PC-9 (cell line): ENCODE measurements at regions of chr10 and their contacts with region 1.

Region 1: GRCh38 chr10:71999360-72000072 is 35.3 kb downstream of the CHST3 start:
- DNase-seq: no peak
- H3K4me3 ChIP-seq: no peak overlapping the region
- H3K27ac ChIP-seq: peak overlapping the region; percentile 69
- H3K4me1 ChIP-seq: peaks cover 29% of the 10 kb centered on the region
- H3K27me3 ChIP-seq: no peaks in the 10 kb centered on the region
- CTCF ChIP-seq: no peak

Region 2: DNA sequence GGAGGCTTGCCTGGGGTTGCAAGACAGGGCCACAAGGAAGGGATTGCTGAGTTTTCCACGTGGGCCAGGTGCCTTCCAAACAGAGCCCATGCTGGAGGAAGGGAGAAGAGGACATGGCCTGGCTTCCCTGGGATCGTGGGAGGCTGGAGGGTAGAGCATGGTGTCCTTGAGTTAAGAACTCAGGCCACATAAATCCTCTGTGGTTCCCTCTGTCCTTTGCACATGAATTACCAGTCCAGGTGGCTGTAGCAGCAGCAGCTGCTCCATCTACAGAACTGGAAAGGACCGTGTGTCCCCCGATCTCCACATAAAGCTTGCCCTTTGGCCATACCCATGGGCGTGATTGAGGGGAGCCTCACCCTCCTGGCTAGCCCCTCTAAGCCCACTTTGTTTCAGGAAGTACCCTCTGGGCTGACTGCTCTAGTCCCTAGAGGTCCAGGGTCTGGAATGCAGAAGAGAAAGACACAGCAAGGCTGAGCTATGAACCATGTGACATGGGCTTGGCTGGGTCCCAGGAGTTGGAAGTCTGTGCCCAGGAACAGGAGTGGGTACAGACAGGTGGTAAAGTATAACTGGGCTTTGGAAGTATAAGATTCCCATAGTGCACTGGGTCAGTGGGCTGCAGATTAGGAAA is 364.9 kb before region 1 on chr10:
- CTCF ChIA-PET with region 1: no interaction called
- POLR2A ChIA-PET with region 1: no interaction called
- intact Hi-C with region 1: no loop called
- DNase-seq: no peak
- H3K4me3 ChIP-seq: no peak overlapping the region
- H3K27ac ChIP-seq: no peak overlapping the region
- H3K4me1 ChIP-seq: peaks cover 16% of the 10 kb centered on the region
- H3K27me3 ChIP-seq: no peaks in the 10 kb centered on the region
- CTCF ChIP-seq: no peak

Region 3: GRCh38 chr10:71893920-71894319 is 105.6 kb before region 1 on chr10:
- CTCF ChIA-PET with region 1: interaction called, 15 read pairs
- POLR2A ChIA-PET with region 1: no interaction called
- intact Hi-C with region 1: no loop called
- DNase-seq: no peak
- H3K4me3 ChIP-seq: no peak overlapping the region
- H3K27ac ChIP-seq: no peak overlapping the region
- H3K4me1 ChIP-seq: peaks cover 16% of the 10 kb centered on the region
- H3K27me3 ChIP-seq: no peaks in the 10 kb centered on the region
- CTCF ChIP-seq: no peak

Region 4: DNA sequence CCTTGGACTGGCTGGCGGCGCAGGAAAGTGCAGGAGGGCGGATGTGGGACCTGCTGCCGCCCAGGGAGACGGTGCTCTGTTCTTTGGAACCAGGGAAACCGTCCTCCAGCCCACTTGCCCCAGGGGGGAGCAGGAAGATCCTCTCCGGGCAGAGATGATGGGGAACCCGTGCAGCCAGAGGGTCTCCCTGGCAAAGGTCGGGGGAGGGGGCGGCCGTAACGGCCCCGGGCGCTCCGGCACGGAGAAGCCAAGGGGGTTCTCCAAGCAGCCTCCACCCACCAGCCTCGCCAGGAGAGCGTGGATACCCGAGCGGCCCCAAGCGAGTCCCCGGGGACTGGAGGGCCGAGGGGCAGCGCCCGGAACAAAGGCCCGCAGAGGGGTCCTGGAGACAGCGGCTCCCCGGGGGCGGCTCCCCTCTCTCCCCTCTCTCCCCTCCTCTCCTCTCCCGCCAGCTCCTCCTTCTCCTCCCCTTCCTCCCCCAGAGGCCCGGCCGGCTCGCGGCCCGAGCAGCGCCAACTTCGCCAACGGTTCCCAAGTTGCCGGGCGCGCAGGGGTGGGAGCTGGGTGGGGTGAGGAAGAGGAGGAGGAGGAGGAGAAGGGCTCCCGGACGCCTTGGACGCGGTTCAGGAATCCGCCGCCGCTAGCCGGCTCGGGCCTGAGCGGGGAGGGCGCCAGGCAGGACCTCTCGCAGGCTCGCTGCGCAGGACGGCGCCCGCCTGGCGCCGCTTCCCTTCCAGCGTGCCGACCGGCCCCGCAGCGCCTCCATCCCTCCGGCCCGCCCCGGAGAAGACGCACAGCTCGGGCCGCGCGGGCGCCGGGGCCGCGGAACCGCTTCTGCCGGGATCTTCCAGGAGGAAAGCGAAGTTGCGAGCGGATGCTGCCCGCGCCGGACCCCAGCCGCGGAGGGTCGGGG is 35.5 kb before region 1 on chr10 and contains the start of gene CHST3:
- CTCF ChIA-PET with region 1: interaction called, 18 read pairs
- POLR2A ChIA-PET with region 1: no interaction called
- intact Hi-C with region 1: no loop called
- DNase-seq: peak in 1 of 2 experiments; percentile 58
- H3K4me3 ChIP-seq: peak within 1 kb of the TSS; percentile 74
- H3K27ac ChIP-seq: no peak within 1 kb of the TSS
- H3K4me1 ChIP-seq: peaks cover 41% of the 10 kb centered on the region
- H3K27me3 ChIP-seq: no peaks in the 10 kb centered on the region
- CTCF ChIP-seq: no peak
- total RNA-seq, gene CHST3: 21.3 and 23.3 TPM in 2 replicates

Region 5: DNA sequence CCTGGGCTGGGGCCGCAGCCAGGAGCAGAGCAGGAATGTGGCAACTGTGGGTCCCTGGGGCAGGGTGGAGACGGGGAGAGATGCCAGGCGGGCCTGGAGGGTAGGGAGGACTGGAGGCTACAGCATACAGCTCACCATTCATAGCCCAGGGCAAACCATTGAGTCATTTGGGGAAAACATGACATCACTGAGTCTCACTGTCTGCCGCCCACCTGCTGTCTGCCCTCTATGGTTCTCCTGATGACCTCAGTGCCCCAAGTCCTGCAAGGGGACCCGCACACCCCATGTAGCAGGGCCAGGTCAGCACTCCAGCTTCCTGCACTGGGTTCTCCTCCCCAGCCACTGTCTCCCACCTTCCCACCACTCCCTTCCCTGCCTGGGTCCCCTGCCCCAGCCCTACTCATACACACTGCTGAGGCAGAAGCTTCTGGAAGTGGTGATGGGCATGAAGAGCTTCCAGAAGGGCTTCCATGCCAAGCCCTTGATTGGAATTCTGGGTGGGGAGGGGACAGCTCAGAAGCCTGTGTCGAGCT is 25.0 kb before region 1 on chr10:
- CTCF ChIA-PET with region 1: interaction called, 4 read pairs
- POLR2A ChIA-PET with region 1: interaction called, 12 read pairs
- intact Hi-C with region 1: loop called (anchors 1 kb)
- DNase-seq: peak; percentile 69 to 91
- H3K4me3 ChIP-seq: no peak overlapping the region
- H3K27ac ChIP-seq: peak overlapping the region; percentile 56
- H3K4me1 ChIP-seq: peaks cover 37% of the 10 kb centered on the region
- H3K27me3 ChIP-seq: no peaks in the 10 kb centered on the region
- CTCF ChIP-seq: no peak

Region 6: DNA sequence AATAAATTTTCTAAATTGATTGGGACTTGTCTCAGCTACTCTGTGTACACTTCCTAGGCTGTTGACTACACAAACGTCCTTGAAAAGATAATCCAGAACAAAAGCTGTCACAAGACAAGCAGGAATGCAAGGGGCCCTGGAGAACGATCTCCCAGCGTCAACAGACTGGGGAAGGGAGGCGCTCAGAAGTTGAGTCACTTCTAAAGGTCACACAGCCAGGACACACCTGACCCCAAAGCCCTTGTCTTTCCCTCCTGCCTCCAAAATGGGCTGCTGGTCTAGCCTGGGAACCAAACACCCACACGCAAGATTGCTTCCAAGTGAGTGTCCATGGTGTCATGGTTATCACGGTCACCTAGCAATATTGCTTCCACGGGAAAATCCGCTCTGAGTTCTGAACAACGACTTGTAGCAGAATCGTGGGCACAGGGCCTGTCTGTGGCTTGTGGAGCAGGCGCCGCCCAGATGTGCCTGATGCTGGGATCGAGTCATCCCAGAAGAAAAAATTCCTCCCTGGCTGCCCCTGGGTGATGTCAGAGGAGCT is 39.0 kb after region 1 on chr10:
- CTCF ChIA-PET with region 1: no interaction called
- POLR2A ChIA-PET with region 1: interaction called, 4 read pairs
- intact Hi-C with region 1: loop called (anchors 5 kb)
- DNase-seq: no peak
- H3K4me3 ChIP-seq: no peak overlapping the region
- H3K27ac ChIP-seq: no peak overlapping the region
- H3K4me1 ChIP-seq: peaks cover 22% of the 10 kb centered on the region
- H3K27me3 ChIP-seq: no peaks in the 10 kb centered on the region
- CTCF ChIP-seq: no peak

Region 7: GRCh38 chr10:72215652-72216549 is 216.4 kb after region 1 on chr10 and contains the starts of genes ANAPC16 and ASCC1:
- CTCF ChIA-PET with region 1: no interaction called
- POLR2A ChIA-PET with region 1: interaction called, 27 read pairs
- intact Hi-C with region 1: no loop called
- DNase-seq: peak; percentile 88 to 98
- H3K4me3 ChIP-seq: peak within 1 kb of the TSS; percentile 80
- H3K27ac ChIP-seq: peak within 1 kb of the TSS; percentile 90
- H3K4me1 ChIP-seq: peaks cover 45% of the 10 kb centered on the region
- H3K27me3 ChIP-seq: no peaks in the 10 kb centered on the region
- CTCF ChIP-seq: no peak
- total RNA-seq, gene ANAPC16: 142 and 171 TPM in 2 replicates
- total RNA-seq, gene ASCC1: 108 and 129 TPM in 2 replicates